ENCODE measurements at regions of chr9 and their contacts with region 1.

Region 1: GRCh38 chr9:125261501-125262293 is at the start of gene GAPVD1:
- DNase-seq: peak; percentile 72
- ATAC-seq: peak; percentile 99
- H3K4me3 ChIP-seq: peak within 1 kb of the TSS; percentile 68
- H3K27ac ChIP-seq: peak within 1 kb of the TSS; percentile 82
- H3K4me1 ChIP-seq: 0 out of 2 replicates have a peak, but pooled peaks cover 2% of the 10 kb centered on the region
- H3K27me3 ChIP-seq: no peaks in the 10 kb centered on the region
- CTCF ChIP-seq: peak; percentile 51
- POLR2A ChIP-seq: 0 out of 2 replicates have a peak, but pooled peaks have one; percentile 37
- RAD21 ChIP-seq: no peak
- total RNA-seq, gene GAPVD1: 40.3 and 50.9 TPM in 2 replicates

Region 2: GRCh38 chr9:125308683-125309082 is 47.0 kb after region 1 on chr9:
- CTCF ChIA-PET with region 1: no interaction called
- POLR2A ChIA-PET with region 1: interaction called, 10 read pairs
- dilution Hi-C with region 1: no loop called
- in situ Hi-C with region 1: no loop called
- intact Hi-C with region 1: no loop called
- DNase-seq: no peak
- ATAC-seq: no peak
- H3K4me3 ChIP-seq: no peak overlapping the region
- H3K27ac ChIP-seq: no peak overlapping the region
- H3K4me1 ChIP-seq: 0 out of 2 replicates have a peak, but pooled peaks cover 2% of the 10 kb centered on the region
- H3K27me3 ChIP-seq: no peaks in the 10 kb centered on the region
- CTCF ChIP-seq: no peak
- POLR2A ChIP-seq: no peak
- RAD21 ChIP-seq: no peak

Region 3: GRCh38 chr9:125343518-125344275 is 82.0 kb after region 1 on chr9:
- CTCF ChIA-PET with region 1: no interaction called
- POLR2A ChIA-PET with region 1: no interaction called
- dilution Hi-C with region 1: no loop called
- in situ Hi-C with region 1: no loop called
- intact Hi-C with region 1: loop called (anchors 5 kb)
- DNase-seq: peak; percentile 76
- ATAC-seq: peak; percentile 82
- H3K4me3 ChIP-seq: no peak overlapping the region
- H3K27ac ChIP-seq: peak overlapping the region; percentile 20; the same call in 1 of the 2 replicates
- H3K4me1 ChIP-seq: peaks cover 12% of the 10 kb centered on the region
- H3K27me3 ChIP-seq: no peaks in the 10 kb centered on the region
- CTCF ChIP-seq: no peak
- POLR2A ChIP-seq: no peak
- RAD21 ChIP-seq: no peak

Region 4: GRCh38 chr9:126883636-126884035 is 1621.9 kb after region 1 on chr9:
- CTCF ChIA-PET with region 1: no interaction called
- POLR2A ChIA-PET with region 1: interaction called, 12 read pairs
- dilution Hi-C with region 1: no loop called
- in situ Hi-C with region 1: no loop called
- intact Hi-C with region 1: no loop called
- DNase-seq: no peak
- ATAC-seq: no peak
- H3K4me3 ChIP-seq: no peak overlapping the region
- H3K27ac ChIP-seq: no peak overlapping the region
- H3K4me1 ChIP-seq: peaks cover 3% of the 10 kb centered on the region
- H3K27me3 ChIP-seq: no peaks in the 10 kb centered on the region
- CTCF ChIP-seq: no peak
- POLR2A ChIP-seq: no peak
- RAD21 ChIP-seq: no peak

Measured in IMR-90 (cell line).